ENCODE measurements at regions of chr6 and their contacts with region 1.

Region 1: GRCh38 chr6:3977875-3978711 is 100.8 kb downstream of the FAM217A start:
- DNase-seq: peak; percentile 38
- ATAC-seq: peak; percentile 97
- H3K4me3 ChIP-seq: no peak overlapping the region
- H3K27ac ChIP-seq: no peak overlapping the region
- H3K4me1 ChIP-seq: no peaks in the 10 kb centered on the region
- H3K27me3 ChIP-seq: no peaks in the 10 kb centered on the region
- CTCF ChIP-seq: peak; percentile 59 to 71 (median 64); a peak in 5 of 6 replicates
- EP300 ChIP-seq: no peak
- POLR2A ChIP-seq: no peak
- RAD21 ChIP-seq: peak; percentile 50

Region 2: DNA sequence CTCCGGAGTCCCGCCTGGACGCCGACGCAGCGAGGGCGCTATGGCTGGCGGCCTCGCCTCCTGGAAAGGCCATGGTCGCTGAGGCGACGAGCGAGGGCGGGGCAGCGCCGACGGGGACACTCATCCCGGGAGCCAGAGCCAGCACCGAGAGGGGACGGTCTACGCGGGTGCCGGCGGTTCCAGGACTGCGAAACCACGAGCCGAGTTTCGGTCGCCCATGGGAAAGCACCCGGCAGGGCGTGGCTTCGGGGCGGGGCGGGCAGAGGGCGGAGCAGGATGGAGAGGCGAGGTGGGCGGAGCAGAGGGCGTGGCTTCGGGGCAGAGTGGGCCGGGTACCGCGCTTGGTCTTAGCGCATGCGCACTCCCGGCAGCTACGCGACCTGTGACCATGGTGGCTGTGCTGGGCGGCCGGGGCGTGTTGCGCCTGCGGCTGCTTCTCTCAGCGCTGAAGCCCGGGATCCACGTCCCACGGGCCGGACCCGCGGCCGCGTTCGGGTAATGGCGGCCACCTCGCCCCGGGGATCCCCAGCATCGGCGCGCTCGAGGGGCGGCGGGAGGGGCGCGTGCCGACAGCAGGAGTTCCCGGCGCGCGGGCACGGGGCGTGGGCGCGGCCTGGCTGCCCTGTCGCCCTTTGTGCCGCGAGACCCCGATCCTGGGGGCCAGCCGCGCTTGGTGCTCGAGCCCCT is 859.6 kb before region 1 on chr6 and contains the start of gene BPHL:
- CTCF ChIA-PET with region 1: no interaction called
- POLR2A ChIA-PET with region 1: no interaction called
- RAD21 ChIA-PET with region 1: no interaction called
- SMC1A ChIA-PET with region 1: no interaction called
- in situ Hi-C with region 1: no loop called
- intact Hi-C with region 1: no loop called
- DNase-seq: peak; percentile 75
- ATAC-seq: peak; percentile 97
- H3K4me3 ChIP-seq: peak within 1 kb of the TSS; percentile 87
- H3K27ac ChIP-seq: peak within 1 kb of the TSS; percentile 86
- H3K4me1 ChIP-seq: peaks cover 6% of the 10 kb centered on the region; the same call in 1 of the 2 replicates
- H3K27me3 ChIP-seq: no peaks in the 10 kb centered on the region
- CTCF ChIP-seq: no peak
- EP300 ChIP-seq: no peak
- POLR2A ChIP-seq: peak; percentile 90
- RAD21 ChIP-seq: no peak
- polyA plus RNA-seq, gene BPHL: 8.0 to 12.9 TPM

Region 3: GRCh38 chr6:3990692-3991501 is 12.8 kb after region 1 on chr6:
- CTCF ChIA-PET with region 1: interaction called, 43 read pairs
- POLR2A ChIA-PET with region 1: no interaction called
- RAD21 ChIA-PET with region 1: interaction called, 7 read pairs
- SMC1A ChIA-PET with region 1: interaction called, 7 read pairs
- in situ Hi-C with region 1: no loop called
- intact Hi-C with region 1: no loop called
- DNase-seq: no peak
- ATAC-seq: peak; percentile 97
- H3K4me3 ChIP-seq: no peak overlapping the region
- H3K27ac ChIP-seq: no peak overlapping the region
- H3K4me1 ChIP-seq: no peaks in the 10 kb centered on the region
- H3K27me3 ChIP-seq: no peaks in the 10 kb centered on the region
- CTCF ChIP-seq: peak; percentile 82 to 88 (median 85)
- EP300 ChIP-seq: no peak
- POLR2A ChIP-seq: no peak
- RAD21 ChIP-seq: peak; percentile 81

Region 4: DNA sequence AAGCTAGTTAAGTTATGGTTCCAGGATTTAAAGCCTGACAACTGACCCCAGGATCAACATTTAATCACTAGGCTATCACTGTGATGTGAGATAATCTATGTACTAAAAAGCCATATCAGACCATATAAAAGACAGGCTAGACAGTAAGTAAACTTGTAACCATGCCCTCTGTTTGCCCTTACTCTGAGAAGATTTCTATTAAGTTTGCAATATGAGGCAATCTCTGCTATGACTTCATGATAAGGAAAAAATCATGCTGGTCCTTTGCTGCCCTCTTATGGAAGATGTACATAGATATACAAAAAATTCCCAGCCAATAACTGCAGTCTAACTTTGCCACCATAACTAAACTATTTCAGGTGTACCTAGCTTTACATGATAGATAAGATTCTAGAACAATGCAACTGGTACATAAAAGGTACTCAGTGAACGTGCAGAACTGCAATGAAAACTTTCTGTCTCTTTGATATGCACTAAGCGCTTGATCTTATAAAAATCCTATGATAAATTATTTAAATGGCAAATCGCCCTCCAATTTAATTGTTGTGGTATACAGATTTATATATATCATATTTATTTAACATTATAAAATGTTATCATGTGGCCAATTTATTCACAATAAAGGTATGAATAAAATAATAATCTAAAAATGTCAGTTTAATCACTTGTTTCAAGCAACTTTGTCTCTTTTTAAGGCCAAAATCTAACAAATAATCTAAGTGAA is 30.4 kb after region 1 on chr6:
- CTCF ChIA-PET with region 1: interaction called, 21 read pairs
- POLR2A ChIA-PET with region 1: no interaction called
- RAD21 ChIA-PET with region 1: no interaction called
- SMC1A ChIA-PET with region 1: interaction called, 8 read pairs
- in situ Hi-C with region 1: no loop called
- intact Hi-C with region 1: no loop called
- DNase-seq: no peak
- ATAC-seq: peak; percentile 68
- H3K4me3 ChIP-seq: no peak overlapping the region
- H3K27ac ChIP-seq: no peak overlapping the region
- H3K4me1 ChIP-seq: peaks cover 5% of the 10 kb centered on the region; the same call in 1 of the 2 replicates
- H3K27me3 ChIP-seq: no peaks in the 10 kb centered on the region
- CTCF ChIP-seq: peak; percentile 38 to 61 (median 43); a peak in 5 of 6 replicates
- EP300 ChIP-seq: no peak
- POLR2A ChIP-seq: no peak
- RAD21 ChIP-seq: peak; percentile 56

Region 5: DNA sequence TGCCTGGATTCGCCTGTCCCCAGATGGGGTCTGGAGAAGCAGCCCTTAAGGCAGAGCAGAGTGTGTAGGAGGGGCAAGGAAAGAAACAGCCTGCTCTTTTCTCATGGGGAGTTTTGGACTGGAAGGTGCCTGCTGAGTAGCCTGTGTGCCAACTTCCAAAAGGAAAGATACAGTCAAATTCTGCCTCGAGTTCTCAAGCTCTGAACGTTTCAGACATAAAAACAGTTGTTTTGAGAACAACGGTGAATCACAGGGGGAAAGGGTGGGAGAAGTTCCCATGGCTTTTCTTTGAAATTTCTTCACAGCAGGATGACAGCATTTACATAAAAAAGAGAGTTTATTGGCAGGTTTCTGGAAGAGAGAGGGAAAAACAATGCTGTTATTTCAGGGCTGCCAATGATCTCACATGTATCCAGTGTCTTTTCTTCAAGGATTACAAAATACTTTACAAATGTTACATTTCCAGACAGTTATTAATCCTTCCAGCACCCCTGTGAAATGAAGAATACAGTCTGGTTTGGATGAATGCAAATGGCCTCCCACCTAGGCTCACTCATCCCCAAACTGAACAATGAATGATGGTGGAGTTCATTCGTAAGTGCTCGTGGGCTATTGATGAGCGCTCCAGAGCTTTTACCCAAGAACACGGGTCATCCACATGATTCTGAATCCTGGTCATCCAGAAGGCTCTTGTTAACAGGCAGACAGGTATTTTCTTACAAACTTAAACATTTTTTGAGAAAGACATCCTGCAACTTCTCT is 191.1 kb after region 1 on chr6:
- CTCF ChIA-PET with region 1: no interaction called
- POLR2A ChIA-PET with region 1: no interaction called
- RAD21 ChIA-PET with region 1: no interaction called
- SMC1A ChIA-PET with region 1: no interaction called
- in situ Hi-C with region 1: no loop called
- intact Hi-C with region 1: no loop called
- DNase-seq: no peak
- ATAC-seq: no peak
- H3K4me3 ChIP-seq: no peak overlapping the region
- H3K27ac ChIP-seq: no peak overlapping the region
- H3K4me1 ChIP-seq: no peaks in the 10 kb centered on the region
- H3K27me3 ChIP-seq: no peaks in the 10 kb centered on the region
- CTCF ChIP-seq: no peak
- EP300 ChIP-seq: no peak
- POLR2A ChIP-seq: no peak
- RAD21 ChIP-seq: no peak

Measured in GM12878 (cell line).